ENCODE measurements at regions of chr3 and their contacts with region 1.

Region 1: DNA sequence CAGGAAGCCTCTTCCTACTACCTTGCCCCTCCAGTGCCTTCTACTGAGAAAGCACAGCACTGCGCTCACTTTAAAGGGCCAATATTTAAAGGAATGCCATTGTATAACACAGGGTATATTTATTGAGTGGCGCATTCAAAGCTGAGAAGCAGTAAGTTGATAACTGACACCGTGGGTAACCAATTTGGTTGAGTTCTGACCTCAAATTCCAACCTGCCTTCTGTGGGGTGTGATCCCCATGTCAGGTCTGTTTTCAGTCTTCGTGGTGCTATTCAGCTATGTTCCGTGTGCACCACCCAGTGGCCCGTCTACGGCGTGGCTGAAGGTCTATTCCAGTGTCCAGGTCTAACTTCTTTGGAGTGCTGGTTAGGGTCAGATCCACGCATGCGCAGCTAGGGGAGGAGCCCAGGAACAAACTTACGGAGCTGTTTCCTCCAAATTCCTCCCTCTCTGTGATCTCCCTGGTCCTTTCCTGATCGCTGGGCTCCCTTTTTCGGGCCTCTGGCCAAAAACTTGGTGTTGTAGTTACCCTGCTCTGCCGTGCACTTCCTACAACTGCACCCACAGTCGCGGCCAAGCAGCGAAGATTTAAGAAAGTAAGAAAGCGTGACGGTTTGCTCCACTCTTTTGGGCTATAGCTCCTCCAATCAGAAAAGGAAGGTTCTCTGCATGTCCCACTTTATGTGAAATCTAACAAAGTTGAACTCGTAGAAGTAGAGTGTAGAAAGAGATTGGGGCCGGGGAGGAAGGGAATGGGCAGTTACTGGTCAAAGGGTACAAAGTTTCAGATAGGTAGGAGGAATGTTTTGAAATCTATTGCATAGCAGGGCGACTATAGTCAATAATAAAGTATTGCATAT is 7.7 kb downstream of the LRRC2 start:
- DNase-seq: peak; percentile 93
- ATAC-seq: peak; percentile 99
- H3K4me3 ChIP-seq: peak overlapping the region; percentile 66 to 69 (median 68)
- H3K27ac ChIP-seq: peak overlapping the region; percentile 76
- H3K4me1 ChIP-seq: peaks cover 16% of the 10 kb centered on the region
- H3K27me3 ChIP-seq: no peaks in the 10 kb centered on the region
- CTCF ChIP-seq: peak; percentile 97
- EP300 ChIP-seq: no peak
- POLR2A ChIP-seq: peak in 1 of 2 experiments; percentile 73; a peak in 3 of 4 replicates
- RAD21 ChIP-seq: peak; percentile 89

Region 2: DNA sequence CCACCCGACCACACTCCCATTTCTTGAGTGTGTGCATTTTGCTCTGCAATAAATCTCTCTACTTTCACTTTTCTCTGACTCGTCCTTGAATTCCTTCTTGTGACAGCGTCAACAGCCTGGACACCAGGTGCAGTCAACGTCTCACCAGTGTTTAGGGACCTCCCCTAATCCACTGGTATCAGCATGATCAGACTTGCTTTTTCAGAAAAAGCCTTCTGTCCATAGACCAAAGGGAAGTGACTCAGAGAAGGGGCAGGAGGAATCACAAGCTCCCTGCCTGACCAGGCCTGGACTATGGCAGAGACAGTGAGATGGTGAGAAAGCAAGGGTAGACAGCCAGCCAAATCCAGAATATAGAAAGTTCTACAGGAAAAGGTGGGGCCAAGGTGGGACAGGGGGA is 172.2 kb before region 1 on chr3:
- CTCF ChIA-PET with region 1: no interaction called
- POLR2A ChIA-PET with region 1: no interaction called
- in situ Hi-C with region 1: no loop called
- intact Hi-C with region 1: no loop called
- DNase-seq: no peak
- ATAC-seq: no peak; the same call in 2 of the 3 replicates
- H3K4me3 ChIP-seq: no peak overlapping the region
- H3K27ac ChIP-seq: no peak overlapping the region
- H3K4me1 ChIP-seq: no peaks in the 10 kb centered on the region
- H3K27me3 ChIP-seq: peaks cover 1 to 12% of the 10 kb centered on the region in 2 experiments; a peak in 1 of 5 replicates
- CTCF ChIP-seq: no peak
- EP300 ChIP-seq: no peak
- POLR2A ChIP-seq: no peak
- RAD21 ChIP-seq: no peak

Region 3: GRCh38 chr3:46488735-46489361 is 69.6 kb before region 1 on chr3:
- CTCF ChIA-PET with region 1: interaction called, 32 read pairs
- POLR2A ChIA-PET with region 1: interaction called, 8 read pairs
- in situ Hi-C with region 1: loop called (anchors 5 kb)
- intact Hi-C with region 1: loop called (anchors 1 kb)
- DNase-seq: peak; percentile 76
- ATAC-seq: peak; percentile 97
- H3K4me3 ChIP-seq: peak overlapping the region in 1 of 3 experiments; percentile 7; a peak in 1 of 6 replicates
- H3K27ac ChIP-seq: no peak overlapping the region
- H3K4me1 ChIP-seq: peaks cover 14% of the 10 kb centered on the region
- H3K27me3 ChIP-seq: no peaks in the 10 kb centered on the region; a peak in 1 of 5 replicates
- CTCF ChIP-seq: peak; percentile 99
- EP300 ChIP-seq: no peak
- POLR2A ChIP-seq: no peak
- RAD21 ChIP-seq: peak; percentile 97

Region 4: DNA sequence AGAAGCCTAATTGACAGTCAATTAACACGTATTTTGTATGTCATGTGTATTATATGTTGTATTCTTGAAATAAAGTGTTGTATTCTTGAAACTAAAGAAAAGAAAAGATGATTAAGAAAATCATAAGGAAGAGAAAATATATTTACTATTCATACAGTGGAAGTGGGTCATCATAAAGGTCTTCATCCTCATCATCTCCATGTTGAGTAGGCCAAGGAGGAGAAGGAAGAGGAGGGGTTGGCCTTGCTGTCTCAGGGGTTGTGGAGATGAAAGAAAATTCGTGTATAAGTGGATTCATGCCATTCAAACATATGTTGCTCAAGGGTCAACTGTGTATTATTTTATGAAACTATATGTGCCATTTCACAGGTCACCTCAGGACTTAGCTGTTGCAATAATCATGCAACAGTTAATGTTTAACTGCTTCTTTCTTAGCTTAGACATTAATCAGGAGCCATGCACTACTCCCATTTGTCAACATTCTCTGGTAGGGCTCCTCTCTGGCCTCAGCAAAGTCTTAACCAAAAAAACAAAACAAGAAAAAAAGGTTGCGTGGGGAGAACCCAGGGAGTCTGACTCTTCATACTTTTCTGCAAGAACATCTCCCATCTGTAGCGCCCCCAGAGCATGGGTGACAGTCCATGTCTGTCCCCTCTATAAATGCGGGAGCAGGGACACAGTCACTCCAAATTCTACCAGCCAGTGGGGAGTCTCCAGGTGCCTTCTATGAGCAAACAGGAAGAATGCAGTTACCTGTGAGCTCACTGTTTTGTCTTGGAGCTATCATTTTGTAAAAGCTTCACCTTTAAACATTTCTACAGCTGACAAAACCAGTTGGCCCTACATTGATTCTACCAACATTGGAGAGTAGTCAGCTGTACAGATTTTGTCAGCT is 27.6 kb after region 1 on chr3:
- CTCF ChIA-PET with region 1: no interaction called
- POLR2A ChIA-PET with region 1: interaction called, 50 read pairs
- in situ Hi-C with region 1: no loop called
- intact Hi-C with region 1: no loop called
- DNase-seq: peak; percentile 81
- ATAC-seq: peak; percentile 93
- H3K4me3 ChIP-seq: peak overlapping the region in 2 of 3 experiments; percentile 10 to 11; a peak in 3 of 6 replicates
- H3K27ac ChIP-seq: peak overlapping the region; percentile 79
- H3K4me1 ChIP-seq: peaks cover 55% of the 10 kb centered on the region
- H3K27me3 ChIP-seq: no peaks in the 10 kb centered on the region
- CTCF ChIP-seq: no peak
- EP300 ChIP-seq: peak in 1 of 2 experiments; percentile 89; a peak in 2 of 4 replicates
- POLR2A ChIP-seq: no peak
- RAD21 ChIP-seq: no peak

Region 5: DNA sequence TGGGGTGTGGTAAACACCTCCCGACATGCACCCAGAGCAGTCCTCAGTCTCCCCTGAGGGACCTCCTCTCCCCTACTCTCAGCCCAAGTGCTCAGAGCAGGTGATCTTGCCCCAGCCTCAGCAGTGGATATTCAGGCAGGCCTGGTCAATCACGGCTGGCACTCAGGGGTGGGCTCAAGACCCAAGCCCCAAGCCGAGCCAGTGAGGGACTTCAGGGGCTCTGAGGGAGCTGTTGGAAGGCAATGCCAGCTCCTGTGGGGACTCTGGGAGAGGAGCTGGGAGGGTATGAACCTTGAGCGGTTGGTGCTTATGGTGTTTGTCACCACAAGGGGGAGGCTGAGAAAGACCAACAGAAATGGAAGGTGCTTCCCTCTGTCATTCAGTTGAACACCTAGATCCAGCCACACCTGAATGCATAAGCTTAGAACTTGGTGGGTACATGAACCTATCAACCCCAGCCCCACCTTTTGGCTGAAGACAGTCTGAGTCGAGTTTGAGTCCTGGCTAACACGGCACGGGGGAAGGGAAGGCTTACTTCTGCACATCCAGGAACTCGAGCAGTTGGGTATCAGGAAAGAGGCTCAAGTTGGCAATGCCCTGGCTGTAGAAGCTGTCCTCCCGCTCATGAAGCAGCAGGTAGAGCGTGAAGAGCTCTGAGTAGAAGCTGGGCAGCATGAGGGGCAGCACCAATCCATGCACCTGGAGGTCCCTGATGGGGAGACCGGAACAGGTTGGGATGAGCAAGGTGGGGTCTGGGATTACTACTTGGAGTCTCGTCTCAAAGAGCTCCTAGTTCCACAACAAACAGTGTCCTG is 115.8 kb after region 1 on chr3:
- CTCF ChIA-PET with region 1: no interaction called
- POLR2A ChIA-PET with region 1: no interaction called
- in situ Hi-C with region 1: no loop called
- intact Hi-C with region 1: no loop called
- DNase-seq: peak; percentile 12
- ATAC-seq: peak; percentile 71
- H3K4me3 ChIP-seq: no peak overlapping the region
- H3K27ac ChIP-seq: no peak overlapping the region
- H3K4me1 ChIP-seq: no peaks in the 10 kb centered on the region
- H3K27me3 ChIP-seq: peaks cover 0 to 36% of the 10 kb centered on the region in 2 experiments; a peak in 4 of 5 replicates
- CTCF ChIP-seq: peak; percentile 19; the same call in 1 of the 2 replicates
- EP300 ChIP-seq: no peak
- POLR2A ChIP-seq: no peak
- RAD21 ChIP-seq: no peak

Region 6: DNA sequence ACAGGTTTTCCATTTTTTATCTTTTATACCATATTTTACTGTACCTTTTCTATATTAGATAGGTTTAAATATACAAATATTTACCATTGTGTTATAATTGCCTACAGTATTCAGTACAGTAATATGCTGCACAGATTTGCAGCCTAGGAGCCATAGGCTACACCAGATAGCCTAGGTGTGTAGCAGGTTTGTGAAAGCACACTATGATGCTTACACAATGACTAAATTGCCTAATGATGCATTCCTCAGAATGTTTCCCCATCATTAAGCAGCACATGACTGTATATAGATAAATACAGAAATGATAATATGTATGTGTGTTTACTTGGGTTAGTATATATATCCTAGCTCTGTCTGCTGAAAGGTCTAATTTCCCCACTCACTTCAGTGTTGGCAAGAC is 239.0 kb after region 1 on chr3:
- CTCF ChIA-PET with region 1: no interaction called
- POLR2A ChIA-PET with region 1: no interaction called
- in situ Hi-C with region 1: no loop called
- intact Hi-C with region 1: no loop called
- DNase-seq: no peak
- ATAC-seq: no peak
- H3K4me3 ChIP-seq: no peak overlapping the region
- H3K27ac ChIP-seq: no peak overlapping the region
- H3K4me1 ChIP-seq: no peaks in the 10 kb centered on the region
- H3K27me3 ChIP-seq: no peaks in the 10 kb centered on the region
- CTCF ChIP-seq: no peak
- EP300 ChIP-seq: no peak
- POLR2A ChIP-seq: no peak
- RAD21 ChIP-seq: no peak

Measured in HepG2 (cell line).